ENCODE measurements at regions of chr15 and their contacts with region 1.

Region 1: GRCh38 chr15:68154923-68155559 is 50.1 kb downstream of the CALML4 start:
- DNase-seq: no peak
- ATAC-seq: peak; percentile 68

Region 2: GRCh38 chr15:67758619-67759300 is 396.3 kb before region 1 on chr15:
- intact Hi-C with region 1: no loop called
- DNase-seq: no peak
- ATAC-seq: no peak

Region 3: GRCh38 chr15:67863442-67863987 is 291.5 kb before region 1 on chr15:
- intact Hi-C with region 1: loop called (anchors 2 kb)
- DNase-seq: peak; percentile 90
- ATAC-seq: peak; percentile 99

Region 4: DNA sequence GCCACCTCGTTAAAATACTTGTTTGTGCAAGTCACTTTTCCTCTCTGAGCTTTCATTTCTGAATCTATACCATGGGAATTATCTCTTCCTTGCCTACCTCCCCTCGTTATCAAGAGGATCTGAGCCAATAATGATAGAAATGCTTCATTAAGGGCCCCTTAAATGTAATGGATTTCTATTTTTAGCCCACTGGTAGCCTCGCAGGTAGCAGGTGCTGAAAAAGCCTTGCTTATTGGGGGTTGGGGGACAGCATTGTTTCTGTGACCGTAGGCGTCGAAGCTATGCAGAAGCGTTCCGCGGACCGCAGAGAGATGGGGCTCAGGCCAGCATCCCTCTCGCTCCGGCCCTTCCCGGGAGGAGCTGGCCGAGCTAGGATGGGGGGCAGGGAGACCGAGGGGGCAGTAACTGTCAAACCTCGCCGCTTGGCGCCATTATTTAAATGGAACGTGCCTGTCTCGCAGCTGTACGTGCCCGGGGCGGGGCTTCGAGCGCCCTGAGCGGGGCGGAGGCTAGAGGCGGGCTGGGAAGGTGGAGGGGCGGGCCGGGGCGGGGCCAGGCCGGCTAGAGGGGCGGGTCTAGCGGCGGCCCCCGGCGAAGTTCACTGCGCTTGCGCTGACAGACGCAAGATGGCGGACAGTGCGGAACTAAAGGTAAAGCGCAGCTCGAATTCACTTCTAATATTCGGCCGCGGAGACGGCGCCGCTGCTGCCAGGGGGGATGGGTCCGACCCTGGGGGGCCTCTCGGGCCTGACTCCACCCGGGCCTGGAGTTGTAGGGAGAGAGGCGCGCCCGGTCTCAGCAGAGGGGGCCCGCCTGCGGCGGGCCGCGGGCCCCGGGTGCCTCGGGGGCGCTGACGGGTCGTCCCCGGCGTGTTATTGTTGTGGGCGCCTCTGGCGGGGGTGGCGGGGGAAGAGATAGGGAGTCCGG is 101.1 kb before region 1 on chr15 and contains the start of gene PIAS1:
- intact Hi-C with region 1: loop called (anchors 10 kb)
- DNase-seq: peak; percentile 97
- ATAC-seq: peak; percentile 97
- total RNA-seq, gene PIAS1: 21.5 TPM

Region 5: DNA sequence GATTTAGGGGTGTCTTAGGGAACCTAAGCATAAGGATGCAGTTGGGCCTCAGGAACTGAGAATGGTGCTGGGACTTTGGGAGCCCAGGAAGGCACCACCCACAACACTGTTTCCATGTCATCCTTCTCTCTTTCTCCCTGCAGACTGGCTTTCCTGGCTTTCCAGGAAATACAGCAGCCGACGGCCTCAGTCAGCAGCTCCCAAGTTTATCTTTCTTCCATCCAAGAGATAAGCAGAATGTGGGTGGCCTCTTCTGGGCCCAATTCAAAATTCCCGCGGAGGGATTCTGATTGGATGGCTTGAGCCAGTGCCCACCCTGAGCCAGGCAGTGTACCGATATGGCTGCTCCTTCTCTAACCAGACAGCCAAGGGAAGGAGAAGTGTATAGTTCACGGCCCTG is 79.0 kb after region 1 on chr15:
- intact Hi-C with region 1: no loop called
- DNase-seq: no peak
- ATAC-seq: no peak

Measured in Right ventricle myocardium superior (tissue), 1 donor.